HCT116 (cell line): ENCODE measurements at regions of chr4 and their contacts with region 1.

Region 1: GRCh38 chr4:127782274-127783025 is at the start of gene HSPA4L:
- DNase-seq: peak; percentile 63
- ATAC-seq: peak; percentile 73
- H3K4me3 ChIP-seq: peak within 1 kb of the TSS; percentile 71 to 83
- H3K27ac ChIP-seq: peak within 1 kb of the TSS; percentile 43
- H3K4me1 ChIP-seq: peaks cover 11 to 27% of the 10 kb centered on the region in 2 experiments; a peak in 3 of 4 replicates
- H3K27me3 ChIP-seq: no peaks in the 10 kb centered on the region
- CTCF ChIP-seq: peak in 1 of 3 experiments; percentile 33; a peak in 1 of 6 replicates
- POLR2A ChIP-seq: peak; percentile 91
- RAD21 ChIP-seq: peak; percentile 53
- total RNA-seq, gene HSPA4L: 18.6 TPM

Region 2: DNA sequence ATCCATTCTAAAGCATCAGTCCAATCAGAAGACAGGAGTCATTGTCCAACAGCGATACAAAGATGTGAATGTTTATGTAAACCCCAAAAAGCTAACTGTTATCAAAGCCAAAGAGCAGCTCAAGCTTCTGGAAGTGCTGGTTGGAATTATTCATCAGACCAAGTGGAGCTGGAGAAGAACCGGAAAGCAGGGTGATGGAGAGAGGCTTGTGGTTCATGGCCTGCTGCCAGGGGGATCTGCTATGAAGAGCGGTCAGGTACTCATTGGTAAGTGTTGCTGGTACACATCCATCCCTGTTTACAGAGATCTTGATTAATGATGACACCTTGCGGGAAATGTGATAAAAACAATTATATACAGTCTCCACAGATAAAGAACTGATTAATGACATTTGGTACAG is 138.7 kb before region 1 on chr4:
- CTCF ChIA-PET with region 1: no interaction called
- POLR2A ChIA-PET with region 1: no interaction called
- RAD21 ChIA-PET with region 1: no interaction called
- intact Hi-C with region 1: no loop called
- DNase-seq: no peak
- ATAC-seq: no peak
- H3K4me3 ChIP-seq: no peak overlapping the region
- H3K27ac ChIP-seq: no peak overlapping the region
- H3K4me1 ChIP-seq: no peaks in the 10 kb centered on the region
- H3K27me3 ChIP-seq: no peaks in the 10 kb centered on the region
- CTCF ChIP-seq: no peak
- POLR2A ChIP-seq: no peak
- RAD21 ChIP-seq: no peak

Region 3: GRCh38 chr4:127668770-127669169 is 113.7 kb before region 1 on chr4:
- CTCF ChIA-PET with region 1: no interaction called
- POLR2A ChIA-PET with region 1: no interaction called
- RAD21 ChIA-PET with region 1: no interaction called
- intact Hi-C with region 1: no loop called
- DNase-seq: no peak
- ATAC-seq: no peak
- H3K4me3 ChIP-seq: no peak overlapping the region
- H3K27ac ChIP-seq: no peak overlapping the region
- H3K4me1 ChIP-seq: no peaks in the 10 kb centered on the region
- H3K27me3 ChIP-seq: no peaks in the 10 kb centered on the region
- CTCF ChIP-seq: no peak
- POLR2A ChIP-seq: no peak
- RAD21 ChIP-seq: no peak

Region 4: GRCh38 chr4:127880764-127881562 is 98.5 kb after region 1 on chr4 and contains the start of gene PLK4:
- CTCF ChIA-PET with region 1: no interaction called
- POLR2A ChIA-PET with region 1: interaction called, 3 read pairs
- RAD21 ChIA-PET with region 1: no interaction called
- intact Hi-C with region 1: loop called (anchors 1 kb)
- DNase-seq: peak; percentile 94
- ATAC-seq: peak; percentile 89
- H3K4me3 ChIP-seq: peak within 1 kb of the TSS; percentile 64 to 90
- H3K27ac ChIP-seq: peak within 1 kb of the TSS; percentile 91
- H3K4me1 ChIP-seq: peaks cover 5 to 13% of the 10 kb centered on the region in 2 experiments
- H3K27me3 ChIP-seq: no peaks in the 10 kb centered on the region
- CTCF ChIP-seq: no peak
- POLR2A ChIP-seq: peak; percentile 60
- RAD21 ChIP-seq: no peak
- total RNA-seq, gene PLK4: 34.8 TPM